Activated T-helper 1 cell treated with anti-CD3 and anti-CD28 coated beads, Interleukin-12 subunit alpha, Interleukin-12 subunit beta, Interleukin-2, Interleukin-4 antibody, amounts not matched to agents 30 ng/mL and 10 ng/mL and 1 ng/mL, durations not matched to agents 14 hours and 24 hours and 36 hours (primary cell): ENCODE measurements at regions of chr1 and their contacts with region 1.

Region 1: DNA sequence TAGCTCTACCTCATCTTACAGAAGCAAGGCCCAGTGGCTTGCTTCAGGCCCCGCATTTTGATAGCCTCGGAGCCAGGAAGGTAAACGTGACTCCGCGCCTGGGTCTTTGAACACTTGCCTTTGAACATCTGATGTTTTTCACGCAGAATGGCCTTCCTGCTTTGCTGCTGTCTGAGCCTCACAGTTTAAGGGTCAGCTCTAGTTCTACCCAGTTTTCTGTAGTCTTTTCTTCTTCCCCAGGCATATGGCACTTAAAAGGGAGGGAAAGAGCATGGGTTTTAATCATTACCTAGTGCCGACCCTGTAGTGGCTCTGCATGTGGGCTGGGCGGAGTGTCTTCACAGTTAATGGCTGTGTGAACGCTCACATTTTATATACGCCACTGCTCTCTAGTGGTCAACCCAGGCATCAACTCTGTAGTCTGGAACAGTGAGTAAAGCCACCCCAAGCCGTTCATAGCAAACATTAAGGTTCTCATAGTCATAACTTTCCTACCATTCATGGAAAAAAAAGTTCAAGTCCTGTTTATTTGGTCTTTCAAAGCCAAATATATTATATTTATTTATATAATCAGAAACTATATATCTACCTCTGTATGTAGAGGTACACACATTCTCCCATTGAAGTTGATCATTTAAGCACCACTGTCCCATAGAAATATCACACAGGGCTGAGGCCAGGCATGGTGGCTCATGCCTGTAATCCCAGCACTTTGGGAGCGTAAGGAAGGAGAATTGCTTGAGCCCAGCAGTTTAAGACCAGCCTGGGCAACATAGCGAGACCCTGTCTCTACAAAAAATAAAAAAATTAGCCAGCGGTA is 78.1 kb downstream of the IER5 start:
- DNase-seq: peak; percentile 62
- H3K4me3 Mint-ChIP-seq: no peak overlapping the region
- H3K27ac Mint-ChIP-seq: no peak overlapping the region
- H3K4me1 Mint-ChIP-seq: peaks cover 6% of the 10 kb centered on the region
- H3K27me3 Mint-ChIP-seq: peaks cover 34% of the 10 kb centered on the region

Region 2: DNA sequence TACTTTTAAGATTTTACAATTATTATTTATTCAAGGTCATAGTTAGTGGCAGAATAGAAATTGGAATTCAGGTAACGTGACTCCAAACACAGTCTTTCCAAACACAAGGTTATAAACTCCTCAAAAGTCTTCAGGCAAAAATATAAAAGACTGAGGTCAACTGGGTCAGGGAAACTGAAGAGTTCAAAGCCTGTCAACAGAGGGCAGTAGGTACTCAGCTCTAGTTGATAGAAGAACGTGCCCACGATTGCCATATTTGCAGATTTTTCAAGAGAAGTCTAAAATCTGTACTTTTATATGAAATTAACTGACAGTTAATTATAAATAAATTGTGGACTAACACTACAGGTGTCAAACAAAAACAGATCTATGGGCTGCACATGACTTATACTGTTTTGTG is 801.5 kb before region 1 on chr1:
- intact Hi-C with region 1: no loop called
- DNase-seq: no peak
- H3K4me3 Mint-ChIP-seq: no peak overlapping the region
- H3K27ac Mint-ChIP-seq: no peak overlapping the region
- H3K4me1 Mint-ChIP-seq: no peaks in the 10 kb centered on the region
- H3K27me3 Mint-ChIP-seq: no peaks in the 10 kb centered on the region

Region 3: GRCh38 chr1:181073638-181074037 is 92.9 kb before region 1 on chr1:
- intact Hi-C with region 1: no loop called
- DNase-seq: no peak
- H3K4me3 Mint-ChIP-seq: no peak overlapping the region
- H3K27ac Mint-ChIP-seq: no peak overlapping the region
- H3K4me1 Mint-ChIP-seq: no peaks in the 10 kb centered on the region
- H3K27me3 Mint-ChIP-seq: peaks cover 39% of the 10 kb centered on the region

Region 4: DNA sequence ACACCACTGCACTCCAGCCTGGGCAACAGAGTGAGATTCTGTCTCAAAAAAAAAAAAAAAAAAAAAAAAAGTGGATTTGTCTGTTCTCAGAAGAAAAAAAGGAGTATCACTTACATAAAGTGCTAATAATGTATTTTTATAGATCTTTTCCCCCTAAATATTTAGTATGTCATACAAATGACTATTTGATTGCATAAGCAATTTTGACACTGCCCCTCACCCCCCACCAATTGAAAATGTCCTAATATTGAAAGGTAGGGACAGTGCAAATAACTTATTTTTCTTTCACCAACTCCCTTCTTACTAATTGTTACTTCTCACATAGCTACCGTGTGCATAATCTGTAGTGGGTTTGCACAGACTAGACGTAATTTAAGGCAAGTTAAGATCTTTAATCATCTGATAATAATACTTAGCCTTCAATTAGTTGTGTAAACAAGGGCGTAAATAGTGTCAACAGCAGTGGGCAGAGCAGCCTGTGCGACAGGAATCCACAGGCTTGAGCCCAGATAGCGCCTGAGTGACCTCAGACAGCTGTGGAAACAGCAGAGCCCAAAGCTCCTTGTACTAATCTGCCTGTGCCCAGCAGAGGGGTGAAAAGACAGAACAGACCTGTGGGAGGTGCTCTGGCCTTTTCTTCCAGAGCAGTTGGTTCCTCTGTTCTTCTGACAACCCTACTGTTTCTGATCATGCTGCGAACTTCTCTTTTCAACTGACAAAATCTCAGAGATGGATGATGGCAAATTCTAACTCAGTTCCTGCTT is 82.6 kb before region 1 on chr1:
- intact Hi-C with region 1: loop called (anchors 1 kb)
- DNase-seq: peak; percentile 54
- H3K4me3 Mint-ChIP-seq: no peak overlapping the region
- H3K27ac Mint-ChIP-seq: peak overlapping the region; percentile 13
- H3K4me1 Mint-ChIP-seq: peaks cover 47% of the 10 kb centered on the region
- H3K27me3 Mint-ChIP-seq: peaks cover 21% of the 10 kb centered on the region

Region 5: GRCh38 chr1:182301467-182302198 is 1135.0 kb after region 1 on chr1:
- intact Hi-C with region 1: no loop called
- DNase-seq: peak; percentile 9
- H3K4me3 Mint-ChIP-seq: peak overlapping the region; percentile 37
- H3K27ac Mint-ChIP-seq: peak overlapping the region; percentile 88
- H3K4me1 Mint-ChIP-seq: peaks cover 51% of the 10 kb centered on the region
- H3K27me3 Mint-ChIP-seq: no peaks in the 10 kb centered on the region